SK-N-SH (cell line): ENCODE measurements at regions of chr2 and their contacts with region 1.

Region 1: DNA sequence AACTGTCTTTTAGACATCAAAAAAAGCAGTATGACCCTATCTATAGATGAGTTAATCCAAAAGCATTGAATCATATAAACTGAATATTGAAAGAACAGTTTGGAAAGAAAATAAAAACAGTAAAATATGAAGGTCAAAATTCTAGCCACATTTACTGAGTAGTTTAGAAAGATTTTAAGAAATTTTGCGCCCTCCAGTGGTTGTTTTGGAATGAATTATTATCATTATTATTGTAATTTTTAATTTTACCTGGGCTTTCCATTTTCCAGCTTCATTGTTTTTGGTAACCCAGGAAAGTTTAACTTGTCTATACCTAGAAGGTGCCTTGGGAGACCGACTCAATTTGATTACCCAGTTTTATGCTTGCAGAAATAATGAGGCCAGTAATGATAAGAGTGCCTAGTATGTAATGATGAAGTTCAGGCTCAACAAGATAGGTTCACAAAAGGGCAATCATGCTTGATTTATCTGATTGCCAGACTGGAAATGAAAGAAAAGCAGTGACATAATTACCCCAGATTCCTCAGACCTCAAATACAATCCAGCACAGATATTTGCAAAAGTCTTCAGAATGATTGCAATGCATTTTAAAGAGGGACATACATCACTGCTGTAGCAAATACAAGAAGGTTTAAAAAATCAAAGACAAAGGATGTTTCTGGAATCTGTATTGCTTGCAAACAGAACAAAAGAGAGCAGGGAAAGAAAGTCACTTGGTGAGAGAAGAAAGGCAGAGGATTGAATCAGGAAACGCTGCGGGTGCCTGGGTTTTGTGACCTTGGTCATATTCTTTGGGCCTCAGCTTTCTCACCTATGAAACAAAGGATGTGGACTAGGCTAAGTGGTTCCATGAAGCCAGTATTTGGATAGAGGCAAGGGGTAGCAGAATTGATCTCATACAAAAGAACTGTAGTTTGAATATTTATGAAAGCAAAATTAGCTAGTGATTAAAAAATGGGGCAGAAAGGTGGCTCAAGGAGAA is 153.8 kb downstream of the MAP2 start:
- DNase-seq: no peak
- H3K4me3 ChIP-seq: no peak overlapping the region; a peak in 1 of 4 replicates
- H3K27ac ChIP-seq: peak overlapping the region in 1 of 2 experiments; percentile 94; a peak in 2 of 4 replicates
- H3K4me1 ChIP-seq: peaks cover 4 to 14% of the 10 kb centered on the region in 2 experiments; a peak in 3 of 4 replicates
- H3K27me3 ChIP-seq: no peaks in the 10 kb centered on the region
- CTCF ChIP-seq: peak; percentile 67
- EP300 ChIP-seq: no peak
- RAD21 ChIP-seq: peak; percentile 54

Region 2: GRCh38 chr2:209565896-209566582 is 11.6 kb before region 1 on chr2:
- CTCF ChIA-PET with region 1: interaction called, 23 read pairs
- POLR2A ChIA-PET with region 1: no interaction called
- DNase-seq: no peak
- H3K4me3 ChIP-seq: no peak overlapping the region
- H3K27ac ChIP-seq: no peak overlapping the region
- H3K4me1 ChIP-seq: no peaks in the 10 kb centered on the region; a peak in 1 of 4 replicates
- H3K27me3 ChIP-seq: no peaks in the 10 kb centered on the region
- CTCF ChIP-seq: no peak
- EP300 ChIP-seq: no peak
- RAD21 ChIP-seq: no peak

Region 3: DNA sequence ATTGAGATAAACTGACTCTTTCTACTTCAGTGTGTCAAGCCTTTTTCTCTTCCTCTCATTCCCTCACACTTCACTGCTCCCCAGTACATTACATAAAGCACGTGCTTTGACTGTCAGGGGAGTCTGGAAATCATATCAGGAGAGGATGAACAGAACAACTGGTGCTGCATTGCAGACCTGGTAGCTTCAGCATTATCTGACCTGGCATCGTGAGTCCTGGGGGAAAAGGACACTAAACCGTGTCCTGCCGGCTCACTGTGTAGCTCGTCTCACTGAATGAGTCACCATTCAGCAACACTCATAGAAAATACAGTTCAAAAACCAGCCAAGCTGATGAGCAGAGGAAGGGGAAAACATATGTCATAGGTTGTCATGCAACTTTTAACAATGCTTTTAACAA is 85.5 kb after region 1 on chr2:
- CTCF ChIA-PET with region 1: interaction called, 5 read pairs
- POLR2A ChIA-PET with region 1: interaction called, 16 read pairs
- DNase-seq: peak; percentile 70
- H3K4me3 ChIP-seq: peak overlapping the region; percentile 12 to 48
- H3K27ac ChIP-seq: peak overlapping the region; percentile 62 to 98
- H3K4me1 ChIP-seq: peaks cover 9% of the 10 kb centered on the region in 2 experiments; a peak in 3 of 4 replicates
- H3K27me3 ChIP-seq: no peaks in the 10 kb centered on the region
- CTCF ChIP-seq: no peak
- EP300 ChIP-seq: peak; percentile 47 to 98; a peak in 3 of 4 replicates
- RAD21 ChIP-seq: peak; percentile 46

Region 4: DNA sequence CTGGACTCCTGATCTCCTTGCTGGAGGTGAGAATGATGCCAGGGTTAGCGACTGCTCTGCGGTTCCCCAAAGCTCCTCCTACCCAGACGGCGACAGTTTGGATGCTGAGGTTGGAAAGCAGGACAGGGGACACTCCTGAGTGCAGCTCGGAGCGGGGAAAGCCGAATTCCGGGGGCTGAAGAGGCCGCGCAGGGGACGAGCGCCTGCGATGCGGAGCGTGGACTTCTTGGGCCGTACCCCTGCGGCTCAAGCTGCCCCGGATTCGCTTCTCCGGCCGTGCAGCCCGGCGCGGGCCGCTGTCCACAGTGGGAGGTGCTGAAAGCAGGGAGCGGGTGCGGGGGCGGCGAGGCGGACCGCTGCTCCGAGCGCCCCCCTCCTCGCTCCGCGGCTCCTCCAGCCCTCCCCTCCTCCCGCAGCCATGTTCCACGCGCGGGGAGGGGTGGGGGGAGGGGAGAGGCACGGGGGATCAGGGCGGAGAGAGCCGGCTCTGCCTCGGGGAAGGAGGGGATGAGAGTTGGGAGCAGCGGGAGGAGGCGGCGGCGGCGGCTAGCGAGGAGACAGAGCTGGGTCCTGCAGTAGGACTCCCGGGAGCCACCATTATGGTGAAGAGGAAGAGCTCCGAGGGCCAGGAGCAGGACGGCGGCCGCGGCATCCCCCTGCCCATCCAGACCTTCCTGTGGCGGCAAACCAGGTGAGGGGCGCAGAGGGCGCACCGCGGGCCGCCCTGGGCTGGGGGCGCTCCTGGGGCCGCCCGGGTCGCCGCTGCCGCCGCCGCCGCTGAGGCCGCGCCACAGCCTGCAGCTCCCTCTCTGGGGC is 194.0 kb after region 1 on chr2 and contains the start of gene UNC80:
- CTCF ChIA-PET with region 1: interaction called, 13 read pairs
- POLR2A ChIA-PET with region 1: interaction called, 36 read pairs
- DNase-seq: peak; percentile 95
- H3K4me3 ChIP-seq: peak within 1 kb of the TSS; percentile 60 to 63
- H3K27ac ChIP-seq: peak within 1 kb of the TSS in 1 of 2 experiments; percentile 85; a peak in 2 of 4 replicates
- H3K4me1 ChIP-seq: peaks cover 0 to 5% of the 10 kb centered on the region in 2 experiments; a peak in 2 of 4 replicates
- H3K27me3 ChIP-seq: no peaks in the 10 kb centered on the region; the same call in 1 of the 2 replicates
- CTCF ChIP-seq: no peak
- EP300 ChIP-seq: no peak
- RAD21 ChIP-seq: peak; percentile 16; the same call in 1 of the 2 replicates
- polyA plus RNA-seq, gene UNC80: 0.59 and 1.3 TPM in 2 replicates